GM10248 (cell line): ENCODE measurements at regions of chr11 and their contacts with region 1.

Region 1: GRCh38 chr11:43632171-43632570 is 48.4 kb upstream of the HSD17B12 start:
- DNase-seq: no peak
- CTCF ChIP-seq: no peak

Region 2: GRCh38 chr11:43614214-43614613 is 18.0 kb before region 1 on chr11:
- CTCF ChIA-PET with region 1: interaction called, 12 read pairs
- POLR2A ChIA-PET with region 1: no interaction called
- DNase-seq: no peak
- CTCF ChIP-seq: no peak